MCF 10A (cell line): ENCODE measurements at regions of chr6 and their contacts with region 1.

Region 1: GRCh38 chr6:99330159-99330558 is 19.3 kb downstream of the FAXC start:
- DNase-seq: peak; percentile 82
- H3K4me3 Mint-ChIP-seq: no peak overlapping the region
- H3K27ac Mint-ChIP-seq: no peak overlapping the region
- H3K4me1 Mint-ChIP-seq: peaks cover 8% of the 10 kb centered on the region
- H3K27me3 Mint-ChIP-seq: no peaks in the 10 kb centered on the region
- CTCF ChIP-seq: peak; percentile 76

Region 2: GRCh38 chr6:99297415-99297814 is 32.7 kb before region 1 on chr6:
- CTCF ChIA-PET with region 1: interaction called, 10 read pairs
- POLR2A ChIA-PET with region 1: no interaction called
- intact Hi-C with region 1: no loop called
- DNase-seq: no peak
- H3K4me3 Mint-ChIP-seq: no peak overlapping the region
- H3K27ac Mint-ChIP-seq: no peak overlapping the region
- H3K4me1 Mint-ChIP-seq: no peaks in the 10 kb centered on the region
- H3K27me3 Mint-ChIP-seq: no peaks in the 10 kb centered on the region
- CTCF ChIP-seq: no peak

Region 3: DNA sequence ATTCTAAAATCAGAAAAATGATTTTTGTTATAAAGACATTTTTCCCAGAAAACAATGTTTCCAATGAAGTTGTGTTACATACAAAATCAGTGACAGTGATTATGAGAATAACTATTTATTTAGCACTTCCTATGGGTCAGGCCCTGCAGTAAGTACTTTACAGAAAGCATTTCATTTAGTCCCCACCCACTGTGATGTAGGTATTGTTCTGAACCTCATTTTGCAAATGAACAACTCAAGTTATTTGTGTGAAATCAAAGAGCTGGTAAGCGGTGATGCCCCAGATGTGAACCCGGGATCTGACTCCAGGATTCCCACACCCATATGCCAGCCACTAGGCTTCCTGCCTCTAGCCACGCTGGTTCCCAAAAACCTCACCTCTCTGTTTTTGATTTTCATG is 11.6 kb before region 1 on chr6:
- CTCF ChIA-PET with region 1: interaction called, 24 read pairs
- POLR2A ChIA-PET with region 1: interaction called, 4 read pairs
- intact Hi-C with region 1: no loop called
- DNase-seq: no peak
- H3K4me3 Mint-ChIP-seq: no peak overlapping the region
- H3K27ac Mint-ChIP-seq: no peak overlapping the region
- H3K4me1 Mint-ChIP-seq: no peaks in the 10 kb centered on the region
- H3K27me3 Mint-ChIP-seq: no peaks in the 10 kb centered on the region
- CTCF ChIP-seq: no peak

Region 4: GRCh38 chr6:99393698-99394531 is 63.8 kb after region 1 on chr6 and contains the start of gene COQ3:
- CTCF ChIA-PET with region 1: interaction called, 32 read pairs
- POLR2A ChIA-PET with region 1: interaction called, 10 read pairs
- intact Hi-C with region 1: loop called (anchors 1 kb)
- DNase-seq: peak; percentile 76
- H3K4me3 Mint-ChIP-seq: peak within 1 kb of the TSS; percentile 93
- H3K27ac Mint-ChIP-seq: peak within 1 kb of the TSS; percentile 96
- H3K4me1 Mint-ChIP-seq: peaks cover 6% of the 10 kb centered on the region
- H3K27me3 Mint-ChIP-seq: no peaks in the 10 kb centered on the region
- CTCF ChIP-seq: no peak
- total RNA-seq, gene COQ3: 4.8 and 7.7 TPM in 2 replicates

Region 5: DNA sequence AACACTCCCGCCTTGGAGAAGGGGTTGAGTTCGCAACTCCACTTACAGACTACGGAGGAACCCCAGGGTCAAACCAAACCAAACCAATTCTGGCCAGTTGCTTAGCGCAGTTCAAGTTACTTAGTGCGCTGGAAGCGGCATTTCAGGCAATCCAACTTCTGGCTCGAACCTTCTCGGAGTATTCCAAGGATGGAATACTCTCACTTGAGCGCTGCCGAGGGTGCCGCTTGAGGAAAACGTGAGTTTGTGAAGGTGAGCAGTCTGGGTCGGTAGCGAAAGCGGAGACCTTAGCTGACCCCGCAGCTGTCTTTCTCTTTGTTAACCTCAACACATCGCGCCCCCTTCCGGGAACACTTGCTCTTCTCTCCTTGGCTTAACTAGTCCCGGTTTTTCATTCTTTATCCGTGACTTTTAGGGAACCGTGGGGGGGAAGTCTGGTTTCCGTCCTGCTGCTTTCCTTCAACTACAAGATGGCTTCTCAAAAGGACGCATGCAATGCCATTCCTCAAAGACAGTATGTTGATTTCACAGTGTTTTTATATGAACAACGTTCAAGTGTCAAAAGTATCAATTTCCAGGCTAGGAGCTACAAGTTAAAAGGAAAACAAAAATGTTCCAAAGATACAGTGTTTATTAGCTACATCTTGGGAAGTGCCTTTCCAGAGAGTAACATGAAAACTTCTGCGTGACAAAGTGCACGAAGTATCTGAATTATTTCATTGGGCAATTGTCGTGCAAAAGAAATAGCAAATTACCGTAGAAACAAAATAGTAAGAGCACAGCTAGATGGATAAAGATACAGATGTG is 95.7 kb after region 1 on chr6:
- CTCF ChIA-PET with region 1: interaction called, 11 read pairs
- POLR2A ChIA-PET with region 1: interaction called, 10 read pairs
- intact Hi-C with region 1: loop called (anchors 1 kb)
- DNase-seq: peak; percentile 94
- H3K4me3 Mint-ChIP-seq: peak overlapping the region; percentile 88
- H3K27ac Mint-ChIP-seq: peak overlapping the region; percentile 99
- H3K4me1 Mint-ChIP-seq: peaks cover 35% of the 10 kb centered on the region
- H3K27me3 Mint-ChIP-seq: no peaks in the 10 kb centered on the region
- CTCF ChIP-seq: peak; percentile 38

Region 6: DNA sequence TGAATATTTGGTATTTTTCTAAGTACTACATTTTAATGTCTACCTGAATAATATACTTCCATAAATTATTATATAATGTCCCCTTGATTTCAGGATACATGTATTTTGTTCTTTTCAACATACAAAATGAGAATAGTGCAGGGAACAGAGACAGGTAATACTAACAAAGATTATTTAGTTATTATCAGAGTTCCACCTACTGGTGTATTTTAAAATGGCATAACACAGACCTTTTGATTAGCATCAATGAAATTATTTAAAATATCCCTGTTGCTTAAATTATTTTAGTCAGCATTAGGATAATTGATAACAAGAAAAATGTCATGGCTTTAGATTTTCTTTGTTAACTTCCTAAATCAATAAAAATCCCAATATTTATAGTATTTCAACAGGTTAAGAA is 460.5 kb after region 1 on chr6:
- CTCF ChIA-PET with region 1: no interaction called
- POLR2A ChIA-PET with region 1: no interaction called
- intact Hi-C with region 1: loop called (anchors 5 kb)
- DNase-seq: peak; percentile 10
- H3K4me3 Mint-ChIP-seq: no peak overlapping the region
- H3K27ac Mint-ChIP-seq: no peak overlapping the region
- H3K4me1 Mint-ChIP-seq: peaks cover 6% of the 10 kb centered on the region
- H3K27me3 Mint-ChIP-seq: peaks cover 37% of the 10 kb centered on the region
- CTCF ChIP-seq: peak; percentile 36